Sciatic nerve (tissue), 2 donors: ENCODE measurements at regions of chr10 and their contacts with region 1.

Region 1: GRCh38 chr10:30103591-30104320 is 44.4 kb upstream of the JCAD start:
- DNase-seq: no peak
- ATAC-seq: no peak

Region 2: GRCh38 chr10:30155401-30155800 is 51.6 kb after region 1 on chr10:
- intact Hi-C with region 1: loop called (anchors 2 kb)
- DNase-seq: no peak
- ATAC-seq: peak; percentile 79